Activated T-helper 1 cell treated with anti-CD3 and anti-CD28 coated beads, Interleukin-12 subunit alpha, Interleukin-12 subunit beta, Interleukin-2, Interleukin-4 antibody, amounts not matched to agents 30 ng/mL and 10 ng/mL and 1 ng/mL, durations not matched to agents 14 hours and 24 hours and 36 hours (primary cell): ENCODE measurements at regions of chr1 and their contacts with region 1.

Region 1: GRCh38 chr1:76830373-76830772 is 36.9 kb upstream of the ST6GALNAC5 start:
- DNase-seq: no peak
- H3K4me3 Mint-ChIP-seq: no peak overlapping the region
- H3K27ac Mint-ChIP-seq: no peak overlapping the region
- H3K4me1 Mint-ChIP-seq: peaks cover 5% of the 10 kb centered on the region
- H3K27me3 Mint-ChIP-seq: peaks cover 1% of the 10 kb centered on the region

Region 2: DNA sequence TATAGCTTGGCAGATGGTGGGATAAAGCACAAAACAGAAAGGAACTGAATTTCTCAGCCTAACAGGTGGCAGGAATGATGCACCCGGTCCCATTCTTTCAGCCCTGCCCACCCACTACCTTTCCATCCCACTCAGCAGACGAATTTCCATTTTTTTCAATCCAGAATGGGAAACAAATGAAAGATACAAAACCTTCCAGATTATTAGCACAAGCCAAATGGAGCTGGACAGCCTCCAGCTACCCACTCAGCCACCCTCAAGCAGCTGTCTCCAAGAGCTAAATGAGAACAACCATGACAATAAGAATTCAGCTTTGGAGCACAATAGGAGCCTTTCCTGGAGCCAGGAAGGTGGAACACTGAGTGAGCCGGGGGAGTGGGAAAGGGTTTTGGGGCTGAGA is 59.4 kb before region 1 on chr1:
- intact Hi-C with region 1: loop called (anchors 10 kb)
- DNase-seq: no peak
- H3K4me3 Mint-ChIP-seq: no peak overlapping the region
- H3K27ac Mint-ChIP-seq: no peak overlapping the region
- H3K4me1 Mint-ChIP-seq: no peaks in the 10 kb centered on the region
- H3K27me3 Mint-ChIP-seq: peaks cover 2% of the 10 kb centered on the region